CD4-positive, alpha-beta memory T cell (primary cell): ENCODE measurements at regions of chr14 and their contacts with region 1.

Region 1: GRCh38 chr14:68780358-68781160 is 12.3 kb downstream of the ZFP36L1 start:
- DNase-seq: peak in 4 of 5 donors; percentile 27 to 64 (median 38)
- H3K4me3 ChIP-seq: peak overlapping the region in 1 of 2 donors; percentile 49
- H3K4me3 Mint-ChIP-seq: peak overlapping the region; percentile 79 to 93 (median 85)
- H3K27ac ChIP-seq: peak overlapping the region; percentile 58
- H3K27ac Mint-ChIP-seq: peak overlapping the region; percentile 93 to 99 (median 97)
- H3K4me1 ChIP-seq: peaks cover 91% of the 10 kb centered on the region
- H3K4me1 Mint-ChIP-seq: peaks cover 60 to 98% (median 76%) of the 10 kb centered on the region in 4 donors
- H3K27me3 ChIP-seq: no peaks in the 10 kb centered on the region
- H3K27me3 Mint-ChIP-seq: no peaks in the 10 kb centered on the region

Region 2: GRCh38 chr14:68663385-68664076 is 117.0 kb before region 1 on chr14:
- CTCF ChIA-PET with region 1: interaction called, 5 read pairs
- POLR2A ChIA-PET with region 1: interaction called, 29 read pairs
- intact Hi-C with region 1: no loop called
- DNase-seq: peak in 1 of 5 donors; percentile 13
- H3K4me3 ChIP-seq: peak overlapping the region; percentile 13 to 65
- H3K4me3 Mint-ChIP-seq: peak overlapping the region; percentile 83 to 97 (median 86)
- H3K27ac ChIP-seq: peak overlapping the region; percentile 3
- H3K27ac Mint-ChIP-seq: peak overlapping the region; percentile 14 to 93 (median 88)
- H3K4me1 ChIP-seq: peaks cover 33% of the 10 kb centered on the region
- H3K4me1 Mint-ChIP-seq: peaks cover 25 to 49% (median 32%) of the 10 kb centered on the region in 4 donors
- H3K27me3 ChIP-seq: no peaks in the 10 kb centered on the region
- H3K27me3 Mint-ChIP-seq: no peaks in the 10 kb centered on the region

Region 3: DNA sequence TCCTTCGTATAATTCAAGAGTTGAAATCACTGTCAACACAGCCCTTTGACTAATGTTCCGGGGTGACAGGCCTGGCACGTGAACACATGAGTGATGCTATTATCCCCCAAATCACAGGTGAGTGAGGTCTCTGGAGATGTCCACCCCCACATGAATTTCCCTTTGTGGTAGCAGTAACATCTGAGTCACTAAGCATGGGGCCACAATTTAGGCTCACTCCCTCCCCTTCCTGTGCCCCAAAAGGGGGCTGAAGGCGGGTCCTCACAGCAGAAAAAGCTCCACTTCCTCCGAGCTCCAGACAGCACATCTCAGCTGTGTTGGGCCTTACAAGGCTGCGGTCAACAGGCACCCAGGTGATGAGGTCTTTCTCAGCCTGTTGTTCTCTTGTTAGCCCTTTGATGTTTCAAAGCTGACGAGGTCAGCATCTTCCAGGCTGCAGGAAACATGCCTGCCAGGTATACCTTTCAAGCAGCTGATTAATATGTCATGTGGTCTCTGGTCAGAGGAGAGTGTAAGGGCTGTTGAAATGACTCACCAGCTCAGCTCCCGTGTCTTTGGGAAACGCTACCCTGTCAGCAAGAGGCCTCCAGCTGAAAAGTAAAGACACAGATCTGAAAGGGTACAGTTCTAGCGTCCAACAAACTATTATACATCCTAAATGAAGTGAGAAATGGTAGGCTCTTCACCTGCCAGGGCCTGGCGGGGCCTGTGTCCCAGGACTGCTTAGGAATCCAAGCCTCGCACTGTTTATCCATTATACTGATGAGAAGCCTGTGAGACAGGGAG is 94.9 kb before region 1 on chr14:
- CTCF ChIA-PET with region 1: interaction called, 48 read pairs
- POLR2A ChIA-PET with region 1: interaction called, 581 read pairs
- intact Hi-C with region 1: loop called (anchors 1 kb)
- DNase-seq: peak; percentile 84 to 97 (median 89)
- H3K4me3 ChIP-seq: peak overlapping the region in 1 of 2 donors; percentile 11
- H3K4me3 Mint-ChIP-seq: peak overlapping the region; percentile 49 to 85 (median 70)
- H3K27ac ChIP-seq: peak overlapping the region; percentile 70
- H3K27ac Mint-ChIP-seq: peak overlapping the region; percentile 93 to 98 (median 97)
- H3K4me1 ChIP-seq: peaks cover 58% of the 10 kb centered on the region
- H3K4me1 Mint-ChIP-seq: peaks cover 48 to 66% (median 60%) of the 10 kb centered on the region in 4 donors
- H3K27me3 ChIP-seq: no peaks in the 10 kb centered on the region
- H3K27me3 Mint-ChIP-seq: no peaks in the 10 kb centered on the region

Region 4: DNA sequence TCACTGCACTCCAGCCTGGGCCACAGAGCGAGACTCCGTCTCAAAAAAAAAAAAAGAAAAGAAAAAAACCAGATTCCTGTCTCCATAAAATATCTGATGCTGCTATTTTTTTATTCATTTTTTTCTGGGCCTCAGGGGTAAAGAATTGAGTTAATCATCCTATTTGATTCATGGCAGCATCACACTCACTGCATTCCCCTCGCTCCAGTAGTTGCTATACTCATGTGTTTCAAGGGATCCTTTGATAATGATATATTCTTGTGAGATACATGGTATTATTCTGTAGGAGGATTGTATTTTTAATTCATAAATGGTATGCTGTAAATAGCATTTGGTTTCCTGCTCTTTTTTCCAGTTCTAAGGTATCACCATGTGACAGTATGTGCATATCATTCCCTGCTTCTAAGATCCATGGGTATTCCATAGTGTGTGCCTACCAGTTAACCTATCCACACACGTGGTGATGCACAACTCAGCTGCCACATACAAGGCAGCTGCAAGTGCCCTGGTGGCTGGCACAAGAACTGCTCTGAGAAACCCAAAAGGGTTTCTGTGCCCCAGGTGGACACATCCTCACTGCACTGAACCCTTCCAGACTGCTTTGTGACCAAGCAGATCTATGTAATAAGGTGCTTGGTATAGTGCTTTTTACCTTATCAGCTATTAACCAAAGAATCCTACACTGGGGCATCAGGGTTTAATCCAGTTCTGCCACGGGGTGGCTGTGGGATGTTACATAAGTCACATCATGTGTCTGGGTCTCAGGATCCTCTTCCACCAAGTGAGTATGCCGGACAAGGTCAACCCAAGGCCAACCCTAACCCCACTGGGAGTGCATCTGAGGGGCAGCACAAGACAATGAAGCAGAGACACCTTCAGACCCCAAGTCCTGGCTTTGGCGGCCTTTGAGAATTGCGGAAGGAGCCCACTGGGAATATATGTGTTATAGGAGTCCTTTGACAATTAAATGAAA is 62.2 kb before region 1 on chr14:
- CTCF ChIA-PET with region 1: interaction called, 6 read pairs
- POLR2A ChIA-PET with region 1: interaction called, 112 read pairs
- intact Hi-C with region 1: loop called (anchors 1 kb)
- DNase-seq: no peak
- H3K4me3 ChIP-seq: no peak overlapping the region
- H3K4me3 Mint-ChIP-seq: no peak overlapping the region
- H3K27ac ChIP-seq: no peak overlapping the region
- H3K27ac Mint-ChIP-seq: peak overlapping the region in 2 of 7 donors; percentile 11 to 35
- H3K4me1 ChIP-seq: peaks cover 40% of the 10 kb centered on the region
- H3K4me1 Mint-ChIP-seq: peaks cover 29 to 66% (median 40%) of the 10 kb centered on the region in 4 donors
- H3K27me3 ChIP-seq: no peaks in the 10 kb centered on the region
- H3K27me3 Mint-ChIP-seq: no peaks in the 10 kb centered on the region

Region 5: DNA sequence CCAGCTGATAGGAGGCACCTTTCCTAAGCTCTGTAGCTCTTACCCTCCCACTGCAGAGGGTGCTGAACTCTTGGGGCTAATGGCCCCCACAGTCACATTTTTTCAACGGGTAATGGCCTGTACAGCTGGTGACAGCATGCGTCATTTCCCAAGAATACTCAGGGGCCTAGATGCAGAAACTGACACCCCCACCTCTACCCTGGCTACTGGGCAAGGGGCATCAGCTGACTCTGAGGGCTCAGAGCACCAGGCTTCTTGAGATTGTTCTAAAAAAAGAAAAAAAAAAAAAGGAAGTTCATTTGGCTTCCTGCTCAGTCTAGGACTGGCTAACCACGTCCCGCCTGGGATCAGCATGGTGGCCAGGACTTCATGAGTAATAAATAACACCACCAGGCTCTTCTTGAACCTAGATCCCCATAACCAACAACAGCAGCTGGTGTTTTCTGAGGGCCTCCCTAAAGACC is 22.9 kb before region 1 on chr14:
- CTCF ChIA-PET with region 1: interaction called, 3 read pairs
- POLR2A ChIA-PET with region 1: interaction called, 997 read pairs
- intact Hi-C with region 1: no loop called
- DNase-seq: no peak
- H3K4me3 ChIP-seq: no peak overlapping the region
- H3K4me3 Mint-ChIP-seq: no peak overlapping the region
- H3K27ac ChIP-seq: no peak overlapping the region
- H3K27ac Mint-ChIP-seq: no peak overlapping the region
- H3K4me1 ChIP-seq: peaks cover 10% of the 10 kb centered on the region
- H3K4me1 Mint-ChIP-seq: peaks cover 4 to 24% (median 14%) of the 10 kb centered on the region in 4 donors
- H3K27me3 ChIP-seq: no peaks in the 10 kb centered on the region
- H3K27me3 Mint-ChIP-seq: no peaks in the 10 kb centered on the region